Heart left ventricle (tissue), 16 donors: ENCODE measurements at regions of chr22 and their contacts with region 1.

Region 1: GRCh38 chr22:23385291-23386244 is 194.5 kb downstream of the IGLL1 start:
- DNase-seq: peak; percentile 68 to 89 (median 77)
- ATAC-seq: peak; percentile 49 to 89 (median 82)
- H3K4me3 ChIP-seq: no peak overlapping the region
- H3K27ac ChIP-seq: no peak overlapping the region
- H3K4me1 ChIP-seq: peaks cover 0 to 9% (median 0%) of the 10 kb centered on the region in 12 donors
- H3K27me3 ChIP-seq: peaks cover 0 to 8% (median 0%) of the 10 kb centered on the region in 9 donors
- CTCF ChIP-seq: peak; percentile 92 to 100 (median 98)
- POLR2A ChIP-seq: no peak

Region 2: GRCh38 chr22:23315341-23315917 is 70.1 kb before region 1 on chr22:
- intact Hi-C with region 1: loop called in 7 of 10 experiments (anchors 1 to 5 kb)
- DNase-seq: peak; percentile 32 to 82 (median 69)
- ATAC-seq: peak in 2 of 4 donors; percentile 24 to 34
- H3K4me3 ChIP-seq: no peak overlapping the region
- H3K27ac ChIP-seq: no peak overlapping the region
- H3K4me1 ChIP-seq: peaks cover 0 to 3% (median 0%) of the 10 kb centered on the region in 12 donors
- H3K27me3 ChIP-seq: no peaks in the 10 kb centered on the region
- CTCF ChIP-seq: peak; percentile 30 to 86 (median 66)
- POLR2A ChIP-seq: no peak

Region 3: DNA sequence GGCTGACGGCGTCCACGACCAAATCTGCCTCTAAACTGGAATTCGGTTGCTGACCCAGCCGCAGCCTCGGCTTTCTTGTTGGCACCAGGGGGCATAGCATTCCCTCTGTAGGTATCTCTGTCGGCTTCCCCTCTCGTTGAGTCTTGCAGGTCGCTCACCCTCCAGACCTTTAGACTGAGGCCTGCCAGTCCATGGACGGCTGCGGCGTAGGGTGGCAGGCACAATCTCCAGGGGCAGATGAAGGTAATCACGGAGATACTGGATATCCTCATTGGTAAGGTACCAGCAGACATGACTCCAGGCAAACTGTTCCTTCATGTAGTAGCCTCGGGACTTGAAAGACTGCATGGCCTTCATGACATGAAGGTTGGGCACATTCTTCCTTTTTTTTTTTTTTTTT is 63.0 kb before region 1 on chr22:
- intact Hi-C with region 1: loop called in 2 of 10 experiments (anchors 5 kb)
- DNase-seq: no peak
- ATAC-seq: no peak
- H3K4me3 ChIP-seq: no peak overlapping the region
- H3K27ac ChIP-seq: no peak overlapping the region
- H3K4me1 ChIP-seq: no peaks in the 10 kb centered on the region
- H3K27me3 ChIP-seq: no peaks in the 10 kb centered on the region
- CTCF ChIP-seq: no peak
- POLR2A ChIP-seq: no peak